Aorta (tissue), 5 donors: ENCODE measurements at regions of chr2 and their contacts with region 1.

Region 1: DNA sequence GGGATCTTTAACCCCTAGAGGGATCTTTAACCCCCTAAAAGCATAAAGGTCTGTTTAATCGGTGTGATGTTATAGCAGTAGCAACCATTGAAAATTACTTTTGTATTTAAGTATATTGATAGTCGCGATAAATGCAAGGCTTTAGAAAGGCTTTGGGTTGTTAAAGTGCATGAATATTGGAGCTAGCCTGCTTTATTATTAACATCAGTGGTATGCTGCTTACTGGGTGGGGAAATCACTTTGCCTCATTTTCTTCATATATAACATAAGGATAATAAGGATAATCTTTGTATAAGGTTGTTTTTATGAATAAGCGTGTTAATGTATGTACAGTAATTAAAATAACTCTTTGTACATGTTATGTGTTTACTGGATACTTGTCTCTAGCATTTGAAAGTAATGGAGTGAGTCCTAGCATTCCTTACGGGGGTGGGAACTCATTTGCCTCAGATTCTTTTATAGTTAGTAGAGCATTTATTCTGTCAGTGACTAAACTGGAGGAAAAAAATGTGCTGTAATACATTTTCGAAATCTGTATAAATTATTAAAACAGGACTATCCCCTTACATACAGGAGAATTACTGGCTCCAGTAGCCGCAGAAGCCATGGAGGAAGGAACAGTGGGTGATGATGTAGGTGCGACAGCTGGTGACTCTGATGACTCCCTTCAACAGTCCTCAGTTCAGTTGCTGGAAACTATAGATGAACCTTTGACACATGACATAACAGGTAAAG is 122.2 kb downstream of the BIRC6 start:
- DNase-seq: no peak
- ATAC-seq: no peak
- H3K4me3 ChIP-seq: no peak overlapping the region
- H3K27ac ChIP-seq: no peak overlapping the region
- H3K4me1 ChIP-seq: no peaks in the 10 kb centered on the region
- H3K27me3 ChIP-seq: no peaks in the 10 kb centered on the region

Region 2: DNA sequence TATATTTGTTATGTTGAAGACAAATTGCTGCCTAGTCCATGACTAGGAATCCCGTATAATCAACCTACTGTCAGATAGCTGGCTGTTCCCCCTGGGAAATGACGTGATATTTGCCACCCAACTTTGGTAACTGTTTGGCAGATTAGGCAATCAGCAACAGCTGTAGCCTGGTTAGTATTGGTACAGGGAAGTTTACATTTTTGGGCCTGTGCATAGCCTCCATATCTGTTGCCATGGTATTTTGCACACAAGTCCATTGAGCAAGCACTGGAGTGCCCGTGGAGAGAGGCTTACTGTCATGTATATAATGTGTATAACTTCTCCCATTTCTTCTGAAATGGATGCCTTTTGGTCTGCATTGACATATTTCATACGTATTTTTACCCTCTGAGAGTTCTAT is 94.5 kb before region 1 on chr2:
- intact Hi-C with region 1: no loop called
- DNase-seq: no peak
- ATAC-seq: no peak
- H3K4me3 ChIP-seq: no peak overlapping the region
- H3K27ac ChIP-seq: no peak overlapping the region
- H3K4me1 ChIP-seq: no peaks in the 10 kb centered on the region
- H3K27me3 ChIP-seq: no peaks in the 10 kb centered on the region

Region 3: DNA sequence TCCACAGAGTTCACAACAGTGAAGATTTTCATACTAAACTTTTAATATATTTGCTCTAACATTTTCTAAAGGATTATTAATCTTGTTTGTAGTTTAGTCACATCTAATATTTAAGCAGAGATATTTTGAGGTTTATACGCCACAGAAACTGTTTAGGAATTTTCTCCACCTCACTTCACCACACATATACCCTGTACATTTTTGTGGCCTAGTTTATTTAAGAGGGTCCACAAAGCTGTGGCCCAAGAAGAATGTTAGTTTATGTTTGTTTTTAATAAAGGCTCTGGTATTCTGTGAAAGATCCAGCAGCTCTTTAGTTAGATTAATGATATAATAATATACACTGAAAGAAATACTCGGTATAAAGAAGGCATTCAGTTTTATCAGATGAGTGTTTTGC is 16.1 kb after region 1 on chr2:
- intact Hi-C with region 1: loop called in 1 of 2 experiments (anchors 2 kb)
- DNase-seq: no peak
- ATAC-seq: no peak
- H3K4me3 ChIP-seq: no peak overlapping the region
- H3K27ac ChIP-seq: no peak overlapping the region
- H3K4me1 ChIP-seq: no peaks in the 10 kb centered on the region
- H3K27me3 ChIP-seq: no peaks in the 10 kb centered on the region

Region 4: DNA sequence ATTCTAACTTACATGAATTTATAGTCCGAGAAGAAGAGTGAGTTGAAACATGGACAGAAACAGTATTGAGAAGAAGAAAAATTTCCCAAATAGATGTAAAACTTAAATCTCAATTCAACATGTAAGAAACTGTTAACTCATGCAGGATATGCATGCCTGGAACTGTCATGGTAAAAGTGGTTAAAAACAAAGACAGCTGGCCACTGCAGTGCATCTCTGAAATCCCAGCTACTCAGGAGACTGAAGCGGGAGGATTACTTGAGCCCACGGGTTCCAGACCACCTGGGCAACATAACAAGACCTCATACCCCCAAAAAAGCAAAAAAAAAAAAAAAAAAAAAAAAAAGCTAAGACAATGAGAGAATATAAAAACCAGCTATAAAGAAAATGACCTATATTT is 55.8 kb after region 1 on chr2:
- intact Hi-C with region 1: no loop called
- DNase-seq: no peak
- ATAC-seq: no peak
- H3K4me3 ChIP-seq: no peak overlapping the region
- H3K27ac ChIP-seq: no peak overlapping the region
- H3K4me1 ChIP-seq: no peaks in the 10 kb centered on the region
- H3K27me3 ChIP-seq: no peaks in the 10 kb centered on the region

Region 5: GRCh38 chr2:32647180-32647651 is 168.2 kb after region 1 on chr2:
- intact Hi-C with region 1: no loop called
- DNase-seq: no peak
- ATAC-seq: peak; percentile 87
- H3K4me3 ChIP-seq: no peak overlapping the region
- H3K27ac ChIP-seq: peak overlapping the region; percentile 87 to 90
- H3K4me1 ChIP-seq: no peaks in the 10 kb centered on the region
- H3K27me3 ChIP-seq: no peaks in the 10 kb centered on the region